OCI-LY7 (cell line): ENCODE measurements at regions of chr1 and their contacts with region 1.

Region 1: DNA sequence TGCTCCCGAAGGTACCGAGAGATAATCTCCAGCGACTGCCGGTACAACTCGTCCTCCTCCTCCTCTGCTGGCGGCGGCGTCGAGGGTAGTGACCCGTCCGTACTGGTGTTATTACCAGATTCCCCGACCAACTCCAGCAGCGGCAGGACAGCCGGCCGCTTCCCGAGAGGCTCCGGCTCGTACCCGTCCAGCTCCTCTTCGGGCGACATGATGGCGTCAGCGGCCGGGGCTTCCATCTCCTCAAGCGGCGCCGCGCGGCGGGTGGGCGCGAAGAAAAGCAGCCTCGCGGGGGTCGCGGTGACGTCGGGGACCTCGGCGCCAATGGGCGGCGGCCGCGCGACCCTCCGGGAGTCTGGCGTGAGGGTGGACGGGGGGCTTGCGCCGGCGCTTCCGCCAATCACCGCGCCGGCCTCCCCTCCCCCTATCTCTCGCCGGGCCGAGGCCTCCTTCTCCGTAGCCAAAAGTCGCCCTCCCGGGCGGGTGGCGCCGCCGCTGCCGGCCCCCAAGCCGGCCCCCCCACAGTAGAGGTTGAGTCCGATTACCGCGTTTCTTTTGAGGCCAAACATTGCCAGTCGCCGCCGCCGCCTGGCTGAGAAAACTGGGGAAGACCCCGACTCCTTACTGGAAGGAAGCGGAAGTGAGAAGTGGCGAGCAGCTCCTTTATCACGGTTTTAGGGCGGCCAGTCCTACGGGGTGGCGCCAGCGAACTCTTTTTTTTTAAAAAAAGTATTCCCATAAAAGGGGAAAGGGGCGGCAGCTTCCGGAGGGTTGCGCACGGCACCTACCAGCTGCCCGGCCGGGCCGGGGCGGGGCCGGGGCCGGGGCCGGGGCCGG is at the start of gene MCL1:
- DNase-seq: peak; percentile 97
- H3K4me3 ChIP-seq: peak within 1 kb of the TSS; percentile 99
- H3K27ac ChIP-seq: peak within 1 kb of the TSS; percentile 85
- H3K4me1 ChIP-seq: peaks cover 45% of the 10 kb centered on the region
- CTCF ChIP-seq: peak; percentile 30; the same call in 1 of the 2 replicates
- total RNA-seq, gene MCL1: 102 and 125 TPM in 2 replicates

Region 2: GRCh38 chr1:150410582-150411101 is 168.5 kb before region 1 on chr1:
- CTCF ChIA-PET with region 1: no interaction called
- POLR2A ChIA-PET with region 1: no interaction called
- intact Hi-C with region 1: no loop called
- DNase-seq: no peak
- H3K4me3 ChIP-seq: no peak overlapping the region
- H3K27ac ChIP-seq: no peak overlapping the region
- H3K4me1 ChIP-seq: peaks cover 17% of the 10 kb centered on the region
- CTCF ChIP-seq: no peak

Region 3: GRCh38 chr1:150420560-150421265 is 158.5 kb before region 1 on chr1:
- CTCF ChIA-PET with region 1: no interaction called
- POLR2A ChIA-PET with region 1: no interaction called
- intact Hi-C with region 1: no loop called
- DNase-seq: no peak
- H3K4me3 ChIP-seq: no peak overlapping the region
- H3K27ac ChIP-seq: no peak overlapping the region
- H3K4me1 ChIP-seq: peaks cover 7% of the 10 kb centered on the region
- CTCF ChIP-seq: no peak

Region 4: DNA sequence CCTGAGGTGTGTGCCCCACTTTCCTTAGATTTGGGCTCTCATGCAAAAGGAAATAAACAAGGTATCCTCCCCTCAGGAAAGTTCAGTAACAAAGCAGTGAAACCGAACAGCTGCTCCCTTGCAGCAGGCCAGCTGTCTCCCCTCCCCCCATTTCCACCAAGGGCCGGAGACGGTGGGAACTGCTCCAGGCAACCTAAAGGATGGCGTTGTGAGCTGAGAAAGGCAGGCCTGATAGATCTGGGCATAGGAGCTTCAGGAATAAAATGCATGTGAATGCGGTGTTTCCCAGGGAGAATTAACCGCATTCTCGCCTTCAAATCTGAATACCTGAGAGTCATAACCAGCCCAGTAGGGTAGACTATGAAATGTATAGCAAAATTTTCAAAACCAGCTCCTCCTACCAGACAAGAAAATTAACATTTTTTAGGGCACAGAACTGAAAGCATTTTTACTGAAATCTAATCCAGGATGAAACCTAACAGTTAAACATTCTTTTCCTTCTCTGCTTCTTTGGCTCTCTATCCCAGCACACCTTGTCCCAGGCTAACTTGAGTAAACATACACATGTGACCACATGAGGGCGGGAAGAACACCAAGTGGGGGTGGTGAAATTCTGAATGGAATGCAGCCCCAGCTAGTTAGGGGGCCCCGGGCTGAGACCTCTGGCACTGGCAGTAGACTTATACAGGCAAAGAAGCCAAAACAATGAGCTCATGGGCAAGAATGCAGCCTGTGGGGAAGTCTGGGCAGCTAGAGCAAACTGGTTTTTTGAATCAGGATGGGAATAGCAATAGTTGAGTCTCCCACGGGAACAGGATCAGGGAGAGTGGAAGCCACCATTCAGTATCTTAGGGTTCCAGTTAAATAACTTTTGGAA is 11.2 kb before region 1 on chr1:
- CTCF ChIA-PET with region 1: interaction called, 7 read pairs
- POLR2A ChIA-PET with region 1: interaction called, 260 read pairs
- intact Hi-C with region 1: loop called (anchors 1 kb)
- DNase-seq: peak; percentile 78
- H3K4me3 ChIP-seq: peak overlapping the region; percentile 57
- H3K27ac ChIP-seq: peak overlapping the region; percentile 99
- H3K4me1 ChIP-seq: peaks cover 94% of the 10 kb centered on the region
- CTCF ChIP-seq: no peak; the same call in 1 of the 2 replicates

Region 5: GRCh38 chr1:150613061-150613920 is 34.1 kb after region 1 on chr1:
- CTCF ChIA-PET with region 1: no interaction called
- POLR2A ChIA-PET with region 1: interaction called, 12 read pairs
- intact Hi-C with region 1: no loop called
- DNase-seq: peak; percentile 53
- H3K4me3 ChIP-seq: no peak overlapping the region
- H3K27ac ChIP-seq: peak overlapping the region; percentile 85
- H3K4me1 ChIP-seq: peaks cover 65% of the 10 kb centered on the region
- CTCF ChIP-seq: no peak

Region 6: DNA sequence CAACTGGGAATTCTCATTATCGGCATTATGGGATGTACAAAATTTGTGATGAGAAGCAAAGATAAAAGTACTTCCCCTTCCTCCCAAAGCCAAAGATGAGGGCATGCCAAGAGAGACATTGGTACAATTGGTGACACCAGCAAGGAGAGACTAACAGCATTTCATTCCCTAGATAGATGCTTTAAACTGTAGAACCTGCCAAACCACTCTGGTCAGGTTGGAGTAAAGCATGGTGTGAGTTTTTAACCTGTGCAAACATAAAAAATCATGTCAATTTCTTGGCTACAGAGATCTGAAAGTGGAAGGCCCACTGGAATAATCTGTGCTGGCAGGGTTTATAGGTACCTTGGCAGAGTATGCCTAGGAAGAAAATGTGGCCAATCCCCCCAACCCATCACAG is 327.2 kb after region 1 on chr1:
- CTCF ChIA-PET with region 1: no interaction called
- POLR2A ChIA-PET with region 1: interaction called, 10 read pairs
- intact Hi-C with region 1: no loop called
- DNase-seq: no peak
- H3K4me3 ChIP-seq: no peak overlapping the region
- H3K27ac ChIP-seq: no peak overlapping the region
- H3K4me1 ChIP-seq: peaks cover 9% of the 10 kb centered on the region
- CTCF ChIP-seq: no peak